ENCODE measurements at regions of chr6 and their contacts with region 1.

Region 1: DNA sequence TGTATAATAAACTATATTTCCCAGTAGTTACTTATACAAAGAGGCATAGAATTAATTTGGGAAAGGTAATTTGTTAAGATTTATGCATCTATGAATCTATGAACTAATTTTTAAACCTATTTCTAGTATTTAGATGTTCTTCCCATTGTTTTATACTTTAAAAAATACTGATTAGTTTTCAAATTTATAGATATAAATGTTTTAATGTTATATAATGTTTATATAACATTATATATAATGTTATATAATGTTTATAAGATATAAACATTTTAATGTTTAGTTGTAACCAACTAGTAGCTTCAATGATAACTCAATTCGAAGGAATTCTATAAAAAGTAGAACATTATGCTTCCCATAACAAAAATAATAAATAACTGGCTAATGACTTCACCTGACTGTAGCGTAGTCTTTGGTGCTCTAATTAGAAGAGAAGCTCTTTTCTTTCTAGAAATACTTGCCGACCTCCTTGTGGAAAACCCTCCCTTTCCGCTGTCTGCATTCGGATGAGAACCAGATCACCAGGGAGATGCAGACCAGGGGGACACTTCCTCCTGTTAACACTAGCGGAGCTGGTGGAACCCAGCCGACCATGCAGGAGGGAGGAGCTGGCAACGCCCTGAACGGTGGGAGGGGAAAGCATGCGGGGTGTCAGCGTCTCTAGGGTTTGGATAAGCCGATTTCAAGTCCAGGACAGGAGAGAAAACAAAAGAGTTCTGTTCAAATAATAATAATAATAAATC is 158.4 kb downstream of the OR2B2 start:
- DNase-seq: peak; percentile 82
- ATAC-seq: peak; percentile 76
- H3K4me3 Mint-ChIP-seq: peak overlapping the region; percentile 95
- H3K27ac Mint-ChIP-seq: peak overlapping the region; percentile 57; the same call in 1 of the 2 replicates
- H3K4me1 Mint-ChIP-seq: peaks cover 30% of the 10 kb centered on the region
- H3K27me3 Mint-ChIP-seq: peaks cover 77% of the 10 kb centered on the region
- CTCF ChIP-seq: no peak

Region 2: DNA sequence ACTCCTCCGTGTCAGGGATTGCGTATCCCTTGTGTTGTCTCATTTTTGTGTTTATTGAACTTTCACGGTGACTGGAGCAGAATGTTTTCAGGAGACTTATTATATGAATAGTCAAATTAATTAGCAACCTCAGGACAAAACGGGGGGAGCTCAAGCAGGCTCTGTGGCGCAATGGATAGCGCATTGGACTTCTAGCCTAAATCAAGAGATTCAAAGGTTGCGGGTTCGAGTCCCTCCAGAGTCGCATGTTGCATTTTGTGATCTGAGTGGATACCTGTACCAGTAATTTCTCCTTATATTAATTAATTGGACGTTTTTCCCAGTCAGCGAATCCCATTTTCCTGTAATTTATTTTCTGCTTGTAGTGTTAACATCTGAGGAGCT is 191.8 kb before region 1 on chr6:
- CTCF ChIA-PET with region 1: interaction called, 13 read pairs
- POLR2A ChIA-PET with region 1: no interaction called
- DNase-seq: peak; percentile 63
- ATAC-seq: no peak
- H3K4me3 Mint-ChIP-seq: peak overlapping the region; percentile 90
- H3K27ac Mint-ChIP-seq: no peak overlapping the region
- H3K4me1 Mint-ChIP-seq: peaks cover 32% of the 10 kb centered on the region
- H3K27me3 Mint-ChIP-seq: peaks cover 87% of the 10 kb centered on the region
- CTCF ChIP-seq: no peak

Region 3: GRCh38 chr6:27608916-27609883 is 144.6 kb before region 1 on chr6:
- CTCF ChIA-PET with region 1: interaction called, 10 read pairs
- POLR2A ChIA-PET with region 1: no interaction called
- DNase-seq: no peak
- ATAC-seq: peak; percentile 40
- H3K4me3 Mint-ChIP-seq: no peak overlapping the region
- H3K27ac Mint-ChIP-seq: 0 out of 2 replicates have a peak overlapping the region, but pooled peaks have one; percentile 22
- H3K4me1 Mint-ChIP-seq: peaks cover 8% of the 10 kb centered on the region
- H3K27me3 Mint-ChIP-seq: peaks cover 20% of the 10 kb centered on the region
- CTCF ChIP-seq: peak; percentile 24; the same call in 1 of the 2 replicates

Region 4: DNA sequence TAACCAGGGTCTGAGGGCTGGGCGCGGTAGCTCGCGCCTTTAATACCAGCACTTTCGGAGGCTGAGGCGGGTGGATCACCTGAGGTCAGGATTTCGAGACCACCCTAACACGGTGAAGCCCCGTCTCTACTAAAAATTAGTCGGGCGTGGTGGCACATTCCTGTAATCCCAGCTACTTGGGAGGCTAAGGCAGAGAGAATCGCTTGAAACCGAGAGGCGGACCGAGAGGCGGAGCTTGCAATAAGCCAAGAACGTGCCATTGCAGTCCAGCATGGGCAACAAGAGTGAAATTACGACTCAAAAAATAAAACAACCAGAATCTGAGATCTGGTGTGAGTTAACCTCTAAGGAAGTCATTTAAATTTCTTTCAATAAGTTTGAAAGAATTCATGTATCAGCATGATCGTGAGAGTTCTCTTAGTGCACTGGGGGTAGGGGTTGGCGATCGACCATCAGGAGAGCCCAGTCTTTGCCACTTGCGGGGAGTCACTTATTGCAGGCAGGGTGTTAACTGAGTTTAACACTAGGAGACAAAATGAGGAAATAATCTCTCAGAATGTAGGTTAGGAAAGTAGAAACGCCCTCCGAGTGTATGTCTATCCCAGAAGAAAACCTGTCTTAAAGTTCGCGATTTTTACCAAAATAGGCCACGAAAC is 74.4 kb before region 1 on chr6:
- CTCF ChIA-PET with region 1: interaction called, 13 read pairs
- POLR2A ChIA-PET with region 1: interaction called, 4 read pairs
- DNase-seq: no peak
- ATAC-seq: peak; percentile 4; the same call in 1 of the 2 replicates
- H3K4me3 Mint-ChIP-seq: peak overlapping the region; percentile 83
- H3K27ac Mint-ChIP-seq: no peak overlapping the region
- H3K4me1 Mint-ChIP-seq: peaks cover 10% of the 10 kb centered on the region
- H3K27me3 Mint-ChIP-seq: peaks cover 74% of the 10 kb centered on the region
- CTCF ChIP-seq: no peak

Region 5: DNA sequence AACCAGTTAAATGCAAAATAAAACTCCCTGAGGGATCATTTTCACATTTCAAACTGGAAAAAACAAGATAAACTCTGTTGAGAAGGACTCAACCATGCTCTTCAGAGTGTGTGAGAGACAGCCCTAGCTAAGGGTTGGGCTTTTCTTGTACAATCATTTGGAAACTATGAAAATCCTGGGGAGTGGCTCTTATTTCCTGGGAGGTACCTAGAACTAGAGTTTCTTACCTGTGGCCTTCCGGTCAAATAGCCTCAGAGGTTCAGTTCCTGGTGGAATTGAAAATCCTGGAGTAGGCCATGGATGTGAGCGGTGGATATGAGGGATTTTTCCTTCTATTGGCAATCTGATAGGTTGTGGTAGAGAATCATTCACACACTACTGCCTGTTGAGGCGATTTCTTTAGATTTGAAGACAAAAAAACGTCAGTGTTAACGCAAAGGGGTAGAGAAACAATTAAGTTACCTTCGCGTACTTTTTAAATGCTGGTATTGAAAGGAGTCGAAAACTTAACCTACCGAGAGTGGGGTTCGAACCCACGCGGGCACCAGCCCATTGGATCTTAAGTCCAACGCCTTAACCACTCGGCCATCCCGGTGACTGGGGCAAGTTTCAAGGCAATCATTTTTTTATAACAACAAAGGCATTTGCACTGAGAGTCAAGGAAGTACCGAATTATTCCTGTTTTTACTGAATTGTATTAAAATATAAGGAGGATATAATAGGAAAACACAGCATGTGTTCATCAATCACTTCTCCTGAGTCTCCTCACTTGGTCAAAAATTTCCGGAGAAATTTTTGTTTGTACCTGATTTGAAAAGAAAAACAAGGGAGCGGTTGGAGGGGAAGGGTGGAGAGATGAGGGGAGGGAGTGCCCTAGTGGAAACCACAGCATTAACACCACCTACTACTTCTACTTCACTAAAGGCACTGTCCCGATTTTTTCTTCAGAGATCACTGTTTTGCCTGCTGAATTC is 32.9 kb before region 1 on chr6:
- CTCF ChIA-PET with region 1: interaction called, 20 read pairs
- POLR2A ChIA-PET with region 1: no interaction called
- DNase-seq: peak; percentile 72
- ATAC-seq: peak; percentile 89
- H3K4me3 Mint-ChIP-seq: peak overlapping the region; percentile 85
- H3K27ac Mint-ChIP-seq: no peak overlapping the region
- H3K4me1 Mint-ChIP-seq: peaks cover 17% of the 10 kb centered on the region
- H3K27me3 Mint-ChIP-seq: peaks cover 9% of the 10 kb centered on the region
- CTCF ChIP-seq: no peak

Region 6: GRCh38 chr6:27743818-27744217 is 10.0 kb before region 1 on chr6:
- CTCF ChIA-PET with region 1: interaction called, 16 read pairs
- POLR2A ChIA-PET with region 1: interaction called, 9 read pairs
- DNase-seq: peak; percentile 32
- ATAC-seq: peak; percentile 82
- H3K4me3 Mint-ChIP-seq: no peak overlapping the region; the same call in 1 of the 2 replicates
- H3K27ac Mint-ChIP-seq: no peak overlapping the region
- H3K4me1 Mint-ChIP-seq: no peaks in the 10 kb centered on the region
- H3K27me3 Mint-ChIP-seq: peaks cover 88% of the 10 kb centered on the region
- CTCF ChIP-seq: no peak

Region 7: GRCh38 chr6:27795697-27796494 is 42.1 kb after region 1 on chr6:
- CTCF ChIA-PET with region 1: interaction called, 14 read pairs
- POLR2A ChIA-PET with region 1: no interaction called
- DNase-seq: no peak
- ATAC-seq: peak; percentile 29
- H3K4me3 Mint-ChIP-seq: peak overlapping the region; percentile 29
- H3K27ac Mint-ChIP-seq: peak overlapping the region; percentile 92
- H3K4me1 Mint-ChIP-seq: peaks cover 15% of the 10 kb centered on the region
- H3K27me3 Mint-ChIP-seq: peaks cover 12% of the 10 kb centered on the region
- CTCF ChIP-seq: peak; percentile 82

Region 8: DNA sequence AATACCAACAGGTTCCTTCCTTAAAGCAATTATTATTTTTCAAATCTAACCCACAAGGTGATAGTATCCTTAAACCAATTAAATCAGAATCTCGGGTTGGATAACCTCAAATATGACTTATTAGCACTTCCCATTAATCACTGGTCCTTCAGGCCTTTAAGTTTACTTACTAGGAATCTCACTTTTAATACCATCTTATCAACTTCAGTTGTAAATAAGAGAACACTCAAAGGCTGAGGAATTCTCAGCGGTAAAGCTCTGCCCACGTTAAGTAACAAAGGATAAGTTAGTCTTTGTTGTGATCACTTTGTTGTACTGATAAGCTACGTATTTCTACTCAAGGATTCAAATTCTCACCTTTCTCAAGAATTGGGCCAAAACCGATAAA is 76.4 kb after region 1 on chr6:
- CTCF ChIA-PET with region 1: no interaction called
- POLR2A ChIA-PET with region 1: no interaction called
- DNase-seq: no peak
- ATAC-seq: peak; percentile 1; the same call in 1 of the 2 replicates
- H3K4me3 Mint-ChIP-seq: peak overlapping the region; percentile 97
- H3K27ac Mint-ChIP-seq: peak overlapping the region; percentile 99
- H3K4me1 Mint-ChIP-seq: peaks cover 35% of the 10 kb centered on the region
- H3K27me3 Mint-ChIP-seq: no peaks in the 10 kb centered on the region
- CTCF ChIP-seq: no peak